AG04449 (cell line): ENCODE measurements at regions of chr11 and their contacts with region 1.

Region 1: GRCh38 chr11:86360775-86361395 is 13.8 kb upstream of the CCDC81 start:
- DNase-seq: peak; percentile 29
- H3K4me3 ChIP-seq: no peak overlapping the region
- CTCF ChIP-seq: peak; percentile 52

Region 2: DNA sequence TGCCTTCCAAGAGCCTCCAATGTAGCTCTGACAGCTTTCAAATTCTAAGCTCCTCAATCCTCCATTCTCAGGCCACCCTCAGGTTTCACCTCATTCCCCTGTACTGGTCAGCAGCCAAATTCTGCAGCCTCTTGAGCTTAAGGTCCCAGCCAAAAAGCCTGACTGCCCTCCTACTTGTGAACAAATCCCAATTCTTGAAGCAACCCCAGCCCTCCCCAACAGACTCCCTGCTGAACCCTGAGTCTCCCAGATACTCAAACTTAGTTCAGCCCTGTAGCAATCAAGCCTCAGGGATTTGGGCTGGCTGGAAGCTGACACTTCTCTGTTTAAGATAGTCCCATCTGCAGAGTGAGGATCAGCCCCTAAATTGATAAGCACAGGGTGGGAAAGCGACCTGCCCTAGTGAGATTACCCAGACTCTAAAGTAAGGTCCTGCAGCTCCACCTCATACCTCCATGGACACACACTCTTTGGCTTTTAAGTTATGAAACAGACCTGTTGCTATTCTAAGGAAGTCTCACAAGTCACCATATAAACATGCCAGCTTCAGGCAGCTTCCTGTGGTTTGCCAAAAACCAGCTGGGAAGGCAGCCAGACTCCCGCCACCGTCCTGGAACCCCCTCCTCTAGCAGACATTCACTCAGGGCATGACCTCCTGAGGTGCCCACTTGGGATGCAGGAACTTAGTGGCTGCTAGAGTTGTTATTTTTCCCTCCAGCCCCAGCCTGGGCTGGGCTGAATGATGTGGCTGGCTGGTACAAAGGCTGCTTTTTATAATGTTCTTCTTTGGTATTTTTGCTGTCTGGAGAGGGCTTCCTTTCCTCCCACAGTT is 209.5 kb before region 1 on chr11:
- CTCF ChIA-PET with region 1: no interaction called
- POLR2A ChIA-PET with region 1: no interaction called
- DNase-seq: no peak
- H3K4me3 ChIP-seq: no peak overlapping the region
- CTCF ChIP-seq: no peak

Region 3: DNA sequence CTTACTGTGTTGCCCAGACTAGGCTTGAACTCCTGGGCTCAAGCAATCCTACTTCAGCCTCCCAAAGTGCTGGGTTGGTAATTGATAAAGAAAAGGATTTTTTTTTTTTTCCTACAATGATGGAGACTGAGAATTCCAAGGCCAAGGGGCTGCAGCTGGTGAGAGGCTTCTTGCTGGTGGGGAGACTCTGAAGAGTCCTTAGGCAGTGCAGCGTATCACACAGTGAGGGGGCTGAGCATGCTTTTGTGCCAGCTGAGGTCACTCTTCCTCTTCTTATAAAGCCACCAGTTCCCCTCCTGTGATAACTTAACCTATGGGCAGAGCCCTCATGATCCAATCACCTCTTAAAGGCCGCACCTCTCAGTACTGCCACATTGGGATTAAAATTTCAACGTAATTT is 14.4 kb before region 1 on chr11:
- CTCF ChIA-PET with region 1: interaction called, 20 read pairs
- POLR2A ChIA-PET with region 1: no interaction called
- DNase-seq: no peak
- H3K4me3 ChIP-seq: no peak overlapping the region
- CTCF ChIP-seq: no peak

Region 4: DNA sequence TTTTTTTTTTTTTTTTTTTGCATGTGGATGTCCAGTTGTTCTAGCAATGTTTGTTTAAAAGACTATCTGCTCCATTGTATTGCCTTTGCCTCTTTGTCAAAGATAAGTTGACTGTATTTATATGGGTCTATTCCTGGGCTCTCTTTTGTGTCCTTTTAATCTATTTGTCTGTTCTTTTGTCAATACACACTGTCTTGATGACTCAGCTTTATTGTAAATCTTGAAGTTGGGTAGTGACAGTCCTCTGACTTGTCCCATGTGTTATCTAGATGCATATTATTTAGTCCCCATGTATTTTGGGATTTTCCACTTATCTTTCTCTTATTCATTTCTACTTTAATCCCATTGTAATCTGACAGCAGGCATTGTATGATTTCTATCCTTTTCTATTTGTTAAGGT is 17.1 kb after region 1 on chr11:
- CTCF ChIA-PET with region 1: interaction called, 20 read pairs
- POLR2A ChIA-PET with region 1: no interaction called
- DNase-seq: no peak
- H3K4me3 ChIP-seq: no peak overlapping the region
- CTCF ChIP-seq: no peak

Region 5: GRCh38 chr11:86418917-86419316 is 58.0 kb after region 1 on chr11:
- CTCF ChIA-PET with region 1: interaction called, 247 read pairs
- POLR2A ChIA-PET with region 1: no interaction called
- DNase-seq: no peak
- H3K4me3 ChIP-seq: no peak overlapping the region
- CTCF ChIP-seq: peak; percentile 32

Region 6: DNA sequence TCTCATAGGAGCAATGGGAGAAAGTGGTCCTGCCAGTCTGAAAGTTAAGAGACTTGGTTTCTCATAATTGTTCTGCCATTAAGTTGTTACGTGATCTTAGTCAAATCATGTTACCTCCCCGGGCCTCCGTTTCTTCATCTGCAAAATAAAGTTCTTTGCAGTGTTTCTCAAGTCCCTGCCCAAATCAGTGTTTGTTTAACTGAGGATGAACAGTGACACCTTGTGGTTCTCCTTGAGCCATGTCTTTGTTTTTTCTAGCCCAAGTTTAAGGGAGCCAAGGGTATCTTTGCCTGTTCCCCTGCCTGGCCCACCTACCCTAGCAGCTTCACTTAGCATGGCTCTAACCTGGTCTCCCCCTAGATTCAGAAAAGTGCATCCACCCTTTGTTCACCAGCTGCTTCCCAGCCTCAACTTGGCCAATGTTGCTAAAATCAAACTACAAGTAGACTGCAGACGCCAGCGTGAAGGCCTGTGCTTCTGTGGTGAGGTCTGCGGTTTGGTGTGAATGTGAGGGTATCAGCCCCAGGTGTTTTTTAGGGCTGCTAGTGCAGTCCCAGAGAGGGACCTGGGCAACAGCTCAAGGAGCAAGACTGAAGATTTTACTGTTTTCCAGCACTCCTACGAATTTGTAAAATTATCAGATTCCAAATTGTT is 558.8 kb after region 1 on chr11:
- CTCF ChIA-PET with region 1: interaction called, 11 read pairs
- POLR2A ChIA-PET with region 1: no interaction called
- DNase-seq: no peak
- H3K4me3 ChIP-seq: no peak overlapping the region
- CTCF ChIP-seq: peak; percentile 66